ENCODE measurements at regions of chr15 and their contacts with region 1.

Region 1: GRCh38 chr15:71448688-71449114 is 333.4 kb downstream of the THSD4 start:
- DNase-seq: peak; percentile 61
- H3K4me3 ChIP-seq: no peak overlapping the region
- H3K27ac ChIP-seq: no peak overlapping the region
- H3K4me1 ChIP-seq: no peaks in the 10 kb centered on the region
- H3K27me3 ChIP-seq: no peaks in the 10 kb centered on the region
- CTCF ChIP-seq: peak; percentile 81 to 87 (median 85)
- POLR2A ChIP-seq: no peak

Region 2: GRCh38 chr15:71114896-71115554 is 333.7 kb before region 1 on chr15 and contains the start of gene THSD4:
- intact Hi-C with region 1: loop called (anchors 10 kb)
- DNase-seq: peak; percentile 83
- H3K4me3 ChIP-seq: peak within 1 kb of the TSS; percentile 57 to 81
- H3K27ac ChIP-seq: peak within 1 kb of the TSS; percentile 26 to 76
- H3K4me1 ChIP-seq: peaks cover 8% of the 10 kb centered on the region
- H3K27me3 ChIP-seq: no peaks in the 10 kb centered on the region
- CTCF ChIP-seq: peak; percentile 93 to 98 (median 96)
- POLR2A ChIP-seq: no peak
- total RNA-seq, gene THSD4: 18.2 to 21.5 TPM

Region 3: DNA sequence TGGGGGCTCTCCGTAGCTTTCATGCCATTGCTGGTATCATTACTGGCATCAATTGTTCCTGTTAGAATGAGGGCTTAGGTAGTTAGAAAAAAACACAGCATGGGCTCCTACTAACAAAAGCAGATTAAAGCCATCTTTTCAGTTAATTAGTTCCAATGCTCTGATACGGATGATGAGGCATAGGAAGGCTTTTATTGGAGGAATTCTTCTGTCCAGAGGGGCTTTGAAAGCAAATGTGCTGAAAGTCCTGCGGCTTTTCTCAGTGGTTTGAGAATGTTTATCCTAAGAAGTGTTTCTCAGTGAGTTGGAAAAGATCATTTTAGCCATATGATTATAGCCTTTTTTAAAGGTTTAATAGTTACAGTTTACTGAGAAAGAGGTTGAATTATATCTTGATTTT is 134.9 kb before region 1 on chr15:
- intact Hi-C with region 1: no loop called
- DNase-seq: no peak
- H3K4me3 ChIP-seq: no peak overlapping the region
- H3K27ac ChIP-seq: no peak overlapping the region
- H3K4me1 ChIP-seq: no peaks in the 10 kb centered on the region
- H3K27me3 ChIP-seq: no peaks in the 10 kb centered on the region
- CTCF ChIP-seq: no peak
- POLR2A ChIP-seq: no peak

Region 4: DNA sequence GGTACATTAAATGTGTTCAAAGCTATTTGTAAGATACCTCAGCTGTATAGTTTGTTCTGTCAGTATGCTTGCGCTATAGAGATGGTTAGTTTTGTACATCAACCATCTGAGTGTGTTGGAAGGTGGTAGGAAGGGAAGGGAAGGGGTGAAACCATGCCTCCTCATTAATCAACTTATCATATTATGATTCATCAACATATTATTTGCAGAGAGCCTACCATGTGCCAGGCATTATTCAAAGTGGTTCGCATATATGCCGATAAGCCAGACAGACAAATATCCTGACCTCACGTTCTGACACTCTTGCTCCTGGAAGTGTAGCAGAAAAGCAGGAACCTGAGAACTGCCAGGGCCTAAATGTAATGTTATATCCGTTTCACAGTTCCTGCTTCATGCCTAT is 113.5 kb after region 1 on chr15:
- intact Hi-C with region 1: no loop called
- DNase-seq: no peak
- H3K4me3 ChIP-seq: no peak overlapping the region
- H3K27ac ChIP-seq: no peak overlapping the region
- H3K4me1 ChIP-seq: no peaks in the 10 kb centered on the region
- H3K27me3 ChIP-seq: no peaks in the 10 kb centered on the region
- CTCF ChIP-seq: no peak
- POLR2A ChIP-seq: no peak

Region 5: DNA sequence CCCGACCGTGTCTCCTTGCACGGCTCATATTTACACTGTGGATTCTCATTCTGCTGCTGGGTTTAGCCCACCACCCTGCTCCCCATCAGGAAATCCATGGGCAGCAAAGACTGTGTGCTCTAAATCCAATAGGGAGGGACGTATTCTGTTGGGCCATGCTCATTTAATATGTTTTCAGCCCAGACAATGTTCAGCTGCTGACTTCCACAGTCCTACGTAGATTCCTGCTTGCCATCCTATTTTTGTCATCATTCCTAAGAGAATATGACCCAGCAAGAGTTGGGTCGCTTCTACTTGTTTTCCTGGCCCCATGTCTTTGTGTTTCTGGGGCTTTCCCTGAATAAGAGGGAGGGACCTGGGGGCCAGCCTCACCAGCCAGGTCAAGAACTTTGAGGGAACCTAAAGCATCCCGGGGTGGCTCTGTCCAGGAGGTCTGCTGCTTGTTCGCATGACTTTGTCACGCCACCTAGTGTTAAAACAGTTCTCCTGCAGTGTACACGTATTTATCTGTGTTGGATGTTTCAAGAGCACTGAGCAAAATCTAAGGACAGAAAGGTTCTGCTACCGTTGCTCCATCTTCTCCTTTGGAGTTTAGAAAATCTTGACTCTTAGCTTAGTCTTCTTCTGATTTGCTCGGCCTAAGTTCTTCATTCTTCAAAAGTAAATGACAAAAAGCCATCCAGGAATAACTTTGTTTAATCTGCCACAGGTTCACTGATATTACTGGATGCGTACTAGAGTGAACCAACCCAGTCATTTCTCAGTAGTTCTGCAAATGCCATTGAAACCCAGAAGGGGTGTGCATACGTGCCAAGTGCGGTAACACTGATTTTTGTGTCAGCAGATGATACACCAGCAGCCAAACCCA is 281.8 kb after region 1 on chr15:
- intact Hi-C with region 1: loop called (anchors 10 kb)
- DNase-seq: peak; percentile 70
- H3K4me3 ChIP-seq: no peak overlapping the region
- H3K27ac ChIP-seq: no peak overlapping the region
- H3K4me1 ChIP-seq: peaks cover 3% of the 10 kb centered on the region
- H3K27me3 ChIP-seq: no peaks in the 10 kb centered on the region
- CTCF ChIP-seq: peak; percentile 40 to 76 (median 66)
- POLR2A ChIP-seq: no peak